Heart left ventricle (tissue), 16 donors: ENCODE measurements at regions of chr6 and their contacts with region 1.

Region 1: GRCh38 chr6:1278061-1278720 is 33.7 kb upstream of the FOXQ1 start:
- DNase-seq: no peak
- ATAC-seq: no peak
- H3K4me3 ChIP-seq: no peak overlapping the region
- H3K27ac ChIP-seq: no peak overlapping the region
- H3K4me1 ChIP-seq: no peaks in the 10 kb centered on the region
- H3K27me3 ChIP-seq: peaks cover 0 to 32% (median 13%) of the 10 kb centered on the region in 9 donors
- CTCF ChIP-seq: no peak
- POLR2A ChIP-seq: no peak

Region 2: DNA sequence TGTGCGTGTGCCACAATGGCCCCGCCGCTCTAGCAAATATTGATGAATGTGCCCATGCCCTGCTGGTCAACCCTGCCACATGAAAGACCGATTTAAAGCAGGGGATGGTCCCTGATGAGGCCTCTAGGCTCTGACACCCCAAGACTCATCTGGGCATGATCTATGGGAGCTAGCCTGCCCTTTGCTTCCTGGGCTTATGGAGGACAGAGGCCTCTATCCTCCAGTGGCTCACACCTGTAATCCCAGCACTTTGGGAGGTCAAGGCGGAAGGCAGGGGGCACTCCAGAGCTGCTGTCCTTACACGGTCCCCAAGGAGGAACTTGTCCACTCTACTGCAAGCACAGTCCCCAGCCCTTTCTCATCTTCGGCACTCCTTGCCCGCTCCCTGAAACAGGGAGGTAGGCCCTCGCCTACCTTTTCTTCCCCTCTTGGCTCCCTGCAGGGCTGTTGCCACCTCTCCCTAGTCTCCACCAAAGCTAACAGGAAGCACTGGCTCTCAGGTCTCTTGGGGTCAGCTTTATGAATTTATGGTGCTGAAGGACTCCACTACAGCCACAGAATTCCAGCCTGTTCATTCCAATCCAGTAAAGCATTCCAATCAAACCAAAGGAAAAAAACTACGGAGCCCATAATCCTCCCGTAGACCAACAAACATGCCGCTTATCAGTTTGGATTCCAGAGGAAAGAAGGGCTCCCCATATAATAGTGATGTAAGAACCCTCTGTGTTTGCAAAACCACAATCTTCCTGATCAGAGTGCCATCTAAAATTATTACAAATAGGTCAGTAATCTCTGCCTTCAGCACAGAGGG is 14.9 kb before region 1 on chr6:
- intact Hi-C with region 1: loop called in 1 of 10 experiments (anchors 2 kb)
- DNase-seq: no peak
- ATAC-seq: no peak
- H3K4me3 ChIP-seq: no peak overlapping the region
- H3K27ac ChIP-seq: no peak overlapping the region
- H3K4me1 ChIP-seq: no peaks in the 10 kb centered on the region
- H3K27me3 ChIP-seq: peaks cover 0 to 34% (median 5%) of the 10 kb centered on the region in 9 donors
- CTCF ChIP-seq: no peak
- POLR2A ChIP-seq: no peak

Region 3: GRCh38 chr6:1562171-1562955 is 284.2 kb after region 1 on chr6:
- intact Hi-C with region 1: no loop called
- DNase-seq: no peak
- ATAC-seq: no peak
- H3K4me3 ChIP-seq: no peak overlapping the region
- H3K27ac ChIP-seq: no peak overlapping the region
- H3K4me1 ChIP-seq: no peaks in the 10 kb centered on the region
- H3K27me3 ChIP-seq: peaks cover 0 to 6% (median 0%) of the 10 kb centered on the region in 9 donors
- CTCF ChIP-seq: no peak
- POLR2A ChIP-seq: no peak